PC-9 (cell line): ENCODE measurements at regions of chr4 and their contacts with region 1.

Region 1: DNA sequence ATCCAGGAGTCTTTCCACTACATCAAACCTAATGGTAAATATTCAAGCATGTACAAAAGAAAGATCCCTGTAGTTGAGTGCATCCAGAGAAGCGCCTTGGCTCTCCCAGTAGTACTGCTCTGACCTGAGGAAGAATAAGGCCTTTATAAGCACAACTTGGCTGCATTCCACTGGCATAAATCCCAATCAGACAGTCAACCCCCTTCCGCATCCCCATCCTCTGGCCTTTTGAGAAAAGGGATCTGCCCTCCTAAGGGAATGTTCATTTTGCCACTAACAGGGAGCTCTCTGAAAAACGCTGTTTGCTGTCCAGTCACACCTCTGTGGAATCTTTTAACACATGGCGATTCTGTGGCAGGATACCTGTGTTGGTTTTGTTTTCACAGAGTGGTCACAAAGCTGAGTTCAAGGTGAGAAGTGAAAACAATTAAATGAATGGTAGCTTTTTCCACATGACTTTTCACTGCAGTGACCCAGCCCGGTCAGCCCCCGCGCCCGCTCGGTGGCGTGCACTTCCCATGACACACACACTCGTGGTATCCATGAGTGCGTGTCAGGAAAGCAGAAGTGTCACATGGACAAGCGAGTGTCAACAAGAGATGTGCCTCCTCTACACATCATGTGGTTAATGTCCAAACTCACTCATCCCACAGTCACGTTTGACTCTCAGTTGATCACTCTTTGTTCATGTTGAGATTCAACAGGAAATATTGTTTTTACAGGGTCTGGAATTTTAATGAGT is 112.2 kb upstream of the ENPP6 start:
- DNase-seq: no peak
- H3K4me3 ChIP-seq: no peak overlapping the region
- H3K27ac ChIP-seq: peak overlapping the region; percentile 66; the same call in 1 of the 2 replicates
- H3K4me1 ChIP-seq: peaks cover 41% of the 10 kb centered on the region
- H3K27me3 ChIP-seq: no peaks in the 10 kb centered on the region
- CTCF ChIP-seq: no peak

Region 2: GRCh38 chr4:183950536-183950935 is 379.3 kb before region 1 on chr4:
- CTCF ChIA-PET with region 1: interaction called, 26 read pairs
- POLR2A ChIA-PET with region 1: no interaction called
- intact Hi-C with region 1: no loop called
- DNase-seq: no peak
- H3K4me3 ChIP-seq: no peak overlapping the region
- H3K27ac ChIP-seq: no peak overlapping the region
- H3K4me1 ChIP-seq: no peaks in the 10 kb centered on the region
- H3K27me3 ChIP-seq: no peaks in the 10 kb centered on the region
- CTCF ChIP-seq: no peak

Region 3: GRCh38 chr4:184019667-184020623 is 309.9 kb before region 1 on chr4:
- CTCF ChIA-PET with region 1: interaction called, 10 read pairs
- POLR2A ChIA-PET with region 1: no interaction called
- intact Hi-C with region 1: no loop called
- DNase-seq: no peak
- H3K4me3 ChIP-seq: no peak overlapping the region
- H3K27ac ChIP-seq: no peak overlapping the region
- H3K4me1 ChIP-seq: 0 out of 2 replicates have a peak, but pooled peaks cover 7% of the 10 kb centered on the region
- H3K27me3 ChIP-seq: no peaks in the 10 kb centered on the region
- CTCF ChIP-seq: no peak

Region 4: GRCh38 chr4:184384056-184384809 is 54.4 kb after region 1 on chr4:
- CTCF ChIA-PET with region 1: no interaction called
- POLR2A ChIA-PET with region 1: no interaction called
- intact Hi-C with region 1: loop called (anchors 2 kb)
- DNase-seq: peak; percentile 44 to 74
- H3K4me3 ChIP-seq: peak overlapping the region; percentile 59; the same call in 1 of the 2 replicates
- H3K27ac ChIP-seq: peak overlapping the region; percentile 96
- H3K4me1 ChIP-seq: peaks cover 41% of the 10 kb centered on the region
- H3K27me3 ChIP-seq: no peaks in the 10 kb centered on the region
- CTCF ChIP-seq: no peak

Region 5: GRCh38 chr4:184500748-184501589 is 171.1 kb after region 1 on chr4:
- CTCF ChIA-PET with region 1: no interaction called
- POLR2A ChIA-PET with region 1: no interaction called
- intact Hi-C with region 1: no loop called
- DNase-seq: no peak
- H3K4me3 ChIP-seq: no peak overlapping the region
- H3K27ac ChIP-seq: no peak overlapping the region
- H3K4me1 ChIP-seq: no peaks in the 10 kb centered on the region
- H3K27me3 ChIP-seq: no peaks in the 10 kb centered on the region
- CTCF ChIP-seq: no peak